Activated CD4-positive, alpha-beta memory T cell treated with anti-CD3 and anti-CD28 coated beads for 36 hours (primary cell): ENCODE measurements at regions of chr7 and their contacts with region 1.

Region 1: DNA sequence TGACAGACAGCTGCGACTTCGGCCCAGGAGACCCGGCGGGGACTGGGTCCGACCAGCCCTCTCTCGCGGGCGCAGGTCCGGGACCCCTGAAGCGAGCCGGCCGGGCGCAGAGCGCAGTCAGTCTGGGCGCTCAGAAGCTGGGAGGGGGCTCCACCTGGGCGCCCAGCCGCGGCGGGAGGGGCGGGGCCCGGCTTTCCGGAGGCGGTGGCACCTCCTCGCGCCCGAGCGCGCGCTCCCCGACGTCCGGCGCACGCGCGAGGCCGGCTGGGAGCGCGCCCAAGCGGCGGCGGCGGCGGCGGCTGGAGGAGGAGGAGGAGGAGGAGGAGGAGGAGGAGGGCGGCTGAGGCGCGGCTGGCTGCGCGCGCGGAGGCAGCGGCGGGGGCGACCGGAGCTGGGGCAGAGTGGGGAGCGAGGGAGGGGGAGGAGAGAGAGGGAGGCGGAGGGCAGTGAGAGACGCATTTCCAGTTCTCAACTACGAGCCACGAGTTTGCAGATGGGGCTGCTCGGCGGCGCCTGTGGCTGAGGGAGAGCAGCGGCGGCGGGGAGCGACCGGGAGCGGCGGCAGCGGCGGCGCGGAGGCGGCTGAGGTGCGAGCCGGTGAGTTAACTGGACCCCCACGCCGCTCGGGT is at the start of gene PALS2:
- DNase-seq: peak; percentile 82
- H3K4me3 Mint-ChIP-seq: peak within 1 kb of the TSS; percentile 83
- H3K27ac Mint-ChIP-seq: peak within 1 kb of the TSS; percentile 70
- H3K4me1 Mint-ChIP-seq: peaks cover 28% of the 10 kb centered on the region
- H3K27me3 Mint-ChIP-seq: peaks cover 3% of the 10 kb centered on the region
- total RNA-seq, gene PALS2: 21.0 to 22.9 TPM

Region 2: GRCh38 chr7:23679898-23680413 is 893.2 kb before region 1 on chr7 and contains the start of gene FAM221A:
- CTCF ChIA-PET with region 1: no interaction called
- POLR2A ChIA-PET with region 1: no interaction called
- intact Hi-C with region 1: loop called (anchors 10 kb)
- DNase-seq: peak; percentile 90
- H3K4me3 Mint-ChIP-seq: peak within 1 kb of the TSS; percentile 84
- H3K27ac Mint-ChIP-seq: peak within 1 kb of the TSS; percentile 73
- H3K4me1 Mint-ChIP-seq: peaks cover 9% of the 10 kb centered on the region
- H3K27me3 Mint-ChIP-seq: peaks cover 5% of the 10 kb centered on the region
- total RNA-seq, gene FAM221A: 9.0 to 10.7 TPM

Region 3: GRCh38 chr7:24290004-24290641 is 283.0 kb before region 1 on chr7:
- CTCF ChIA-PET with region 1: no interaction called
- POLR2A ChIA-PET with region 1: no interaction called
- intact Hi-C with region 1: loop called (anchors 2 kb)
- DNase-seq: peak; percentile 76
- H3K4me3 Mint-ChIP-seq: no peak overlapping the region
- H3K27ac Mint-ChIP-seq: no peak overlapping the region
- H3K4me1 Mint-ChIP-seq: peaks cover 14% of the 10 kb centered on the region
- H3K27me3 Mint-ChIP-seq: peaks cover 39% of the 10 kb centered on the region

Region 4: GRCh38 chr7:24560772-24561171 is 12.3 kb before region 1 on chr7:
- CTCF ChIA-PET with region 1: interaction called, 4 read pairs
- POLR2A ChIA-PET with region 1: no interaction called
- intact Hi-C with region 1: loop called (anchors 1 kb)
- DNase-seq: no peak
- H3K4me3 Mint-ChIP-seq: no peak overlapping the region
- H3K27ac Mint-ChIP-seq: no peak overlapping the region
- H3K4me1 Mint-ChIP-seq: peaks cover 17% of the 10 kb centered on the region
- H3K27me3 Mint-ChIP-seq: no peaks in the 10 kb centered on the region

Region 5: GRCh38 chr7:24595671-24596418 is 22.7 kb after region 1 on chr7:
- CTCF ChIA-PET with region 1: no interaction called
- POLR2A ChIA-PET with region 1: no interaction called
- intact Hi-C with region 1: no loop called
- DNase-seq: no peak
- H3K4me3 Mint-ChIP-seq: no peak overlapping the region
- H3K27ac Mint-ChIP-seq: no peak overlapping the region
- H3K4me1 Mint-ChIP-seq: no peaks in the 10 kb centered on the region
- H3K27me3 Mint-ChIP-seq: no peaks in the 10 kb centered on the region

Region 6: GRCh38 chr7:24757353-24758275 is 184.5 kb after region 1 on chr7 and contains the start of gene GSDME:
- CTCF ChIA-PET with region 1: interaction called, 3 read pairs
- POLR2A ChIA-PET with region 1: no interaction called
- intact Hi-C with region 1: loop called (anchors 2 kb)
- DNase-seq: peak; percentile 35
- H3K4me3 Mint-ChIP-seq: peak within 1 kb of the TSS; percentile 78
- H3K27ac Mint-ChIP-seq: no peak within 1 kb of the TSS
- H3K4me1 Mint-ChIP-seq: peaks cover 30% of the 10 kb centered on the region
- H3K27me3 Mint-ChIP-seq: peaks cover 45% of the 10 kb centered on the region
- total RNA-seq, gene GSDME: 4.7 TPM

Region 7: DNA sequence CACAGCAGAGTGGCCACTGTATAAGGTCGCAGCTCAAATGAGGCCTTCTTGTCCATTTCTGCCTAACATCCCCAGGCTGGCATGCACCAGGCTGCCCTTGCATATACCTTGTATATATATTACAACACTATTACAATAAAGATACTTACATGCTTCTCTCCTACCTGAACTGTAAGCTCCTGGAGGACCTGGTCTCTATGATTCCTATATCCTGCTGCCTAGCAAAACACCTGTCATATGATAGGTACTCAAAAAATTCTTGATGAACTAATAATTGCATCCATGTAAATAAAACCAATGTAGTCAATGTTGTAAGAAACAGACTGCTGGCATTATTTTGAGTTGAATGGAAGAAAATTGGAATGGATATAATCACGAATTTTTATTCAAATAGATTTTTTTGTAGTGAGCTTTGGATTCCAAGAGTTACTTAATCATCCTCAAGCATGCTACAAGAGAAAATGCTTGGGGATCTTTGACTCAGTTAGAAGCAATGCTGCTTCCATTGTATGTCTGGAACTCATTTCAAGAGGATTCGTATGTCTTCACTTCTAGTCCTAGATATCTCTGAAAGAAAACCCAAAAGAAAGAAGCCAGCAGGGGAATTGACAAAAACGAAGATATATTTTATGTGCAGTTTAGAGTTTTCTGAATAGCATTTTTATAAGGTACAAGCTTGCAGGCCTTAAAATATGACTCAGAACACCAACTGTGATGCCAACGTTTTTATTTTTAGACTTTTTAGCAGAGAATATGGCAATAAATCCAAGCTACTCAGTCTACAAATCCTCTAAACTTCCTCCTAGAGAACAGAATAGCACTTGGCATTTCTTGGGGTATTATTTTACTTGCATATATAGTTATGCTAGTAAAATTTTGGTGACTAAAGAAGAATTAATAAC is 353.8 kb after region 1 on chr7:
- CTCF ChIA-PET with region 1: no interaction called
- POLR2A ChIA-PET with region 1: no interaction called
- intact Hi-C with region 1: no loop called
- DNase-seq: no peak
- H3K4me3 Mint-ChIP-seq: no peak overlapping the region
- H3K27ac Mint-ChIP-seq: no peak overlapping the region
- H3K4me1 Mint-ChIP-seq: peaks cover 63% of the 10 kb centered on the region
- H3K27me3 Mint-ChIP-seq: no peaks in the 10 kb centered on the region

Region 8: GRCh38 chr7:25125137-25125946 is 552.2 kb after region 1 on chr7 and contains the start of gene CYCS:
- CTCF ChIA-PET with region 1: no interaction called
- POLR2A ChIA-PET with region 1: interaction called, 3 read pairs
- intact Hi-C with region 1: loop called (anchors 2 kb)
- DNase-seq: peak; percentile 100
- H3K4me3 Mint-ChIP-seq: peak within 1 kb of the TSS; percentile 100
- H3K27ac Mint-ChIP-seq: peak within 1 kb of the TSS; percentile 100
- H3K4me1 Mint-ChIP-seq: peaks cover 24% of the 10 kb centered on the region
- H3K27me3 Mint-ChIP-seq: no peaks in the 10 kb centered on the region
- total RNA-seq, gene CYCS: 199 to 207 TPM